Activated CD8-positive, alpha-beta T cell treated with anti-CD3 and anti-CD28 coated beads for 36 hours (primary cell): ENCODE measurements at regions of chr3 and their contacts with region 1.

Region 1: DNA sequence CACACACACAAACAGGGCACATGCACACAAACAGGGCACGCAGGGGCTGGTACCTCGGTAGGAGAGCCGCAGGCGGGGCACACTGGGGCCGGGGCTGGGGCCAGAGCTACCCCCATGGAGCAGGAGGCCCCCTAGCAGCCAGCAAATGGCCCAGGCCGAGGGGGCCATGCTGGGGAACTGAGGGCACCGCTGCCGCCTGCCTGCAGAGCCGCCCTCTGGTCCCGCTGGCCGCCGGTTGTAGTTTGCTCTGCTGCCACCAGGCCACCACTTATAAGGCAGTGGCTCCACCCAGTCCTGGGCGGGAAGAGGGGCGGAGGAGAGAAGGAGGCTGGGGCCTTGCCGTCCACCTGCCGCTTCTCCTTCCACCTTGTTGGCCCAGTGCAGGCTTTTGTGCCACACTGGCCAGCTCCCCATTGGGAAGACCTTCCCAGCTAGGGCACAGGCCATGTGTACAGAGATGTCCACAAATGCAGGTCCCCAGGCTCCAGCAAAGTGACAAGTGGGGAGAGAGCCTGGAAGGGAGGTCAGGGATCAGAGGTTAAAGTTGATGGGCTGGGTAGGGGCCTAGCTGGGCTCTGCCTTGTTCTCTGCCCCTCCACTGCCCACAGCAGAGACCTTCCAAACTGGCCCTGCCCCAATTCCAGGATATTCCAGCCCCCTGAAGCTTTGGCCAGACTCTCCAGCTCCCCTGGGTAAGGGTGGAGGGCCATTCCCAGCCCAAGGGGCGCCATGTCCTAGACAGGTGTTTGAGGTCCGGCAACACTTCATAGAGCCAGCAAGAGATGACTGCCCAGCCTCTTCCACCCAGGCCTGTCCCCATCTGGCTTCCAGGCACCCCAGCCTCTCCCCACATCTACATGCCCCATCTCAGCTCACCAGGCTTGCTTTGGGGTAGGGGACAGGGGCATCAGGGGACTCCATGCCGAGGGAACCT is at the start of gene SEMA3G:
- DNase-seq: peak; percentile 91
- ATAC-seq: peak; percentile 97
- H3K4me3 Mint-ChIP-seq: no peak within 1 kb of the TSS
- H3K27ac Mint-ChIP-seq: no peak within 1 kb of the TSS
- H3K4me1 Mint-ChIP-seq: peaks cover 4% of the 10 kb centered on the region
- H3K27me3 Mint-ChIP-seq: no peaks in the 10 kb centered on the region
- CTCF ChIP-seq: peak; percentile 64
- total RNA-seq, gene SEMA3G: not detected

Region 2: DNA sequence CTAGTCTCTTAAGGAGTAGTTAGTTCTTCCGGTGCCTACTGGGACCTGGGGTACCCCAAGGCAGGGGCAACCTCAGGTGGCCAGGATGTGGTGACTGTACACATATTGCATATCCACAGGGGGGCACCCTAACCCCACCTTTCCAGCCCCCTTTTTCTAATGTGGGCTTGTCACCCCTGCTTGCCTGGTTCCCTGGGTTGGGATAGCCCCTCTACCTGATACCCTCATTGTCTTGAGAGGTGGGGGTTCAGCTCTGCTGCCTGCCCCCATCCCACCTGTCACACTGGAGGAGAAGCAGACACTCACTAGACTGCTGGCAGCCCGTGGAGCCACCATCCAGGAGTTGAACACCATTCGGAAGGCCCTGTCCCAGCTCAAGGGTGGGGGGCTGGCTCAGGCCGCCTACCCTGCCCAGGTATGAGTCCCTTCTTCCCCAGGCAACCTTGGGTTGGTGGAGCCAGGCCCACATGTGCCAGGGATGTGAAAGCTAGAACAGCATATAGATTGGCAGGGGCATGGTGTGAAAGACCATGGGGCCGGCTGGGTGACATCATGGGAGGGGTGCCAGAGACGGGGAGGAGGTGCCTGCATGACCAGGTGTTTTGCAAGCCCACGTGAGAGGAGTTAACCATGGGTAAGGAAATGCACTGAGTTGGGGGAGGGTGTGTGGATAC is 153.5 kb before region 1 on chr3:
- CTCF ChIA-PET with region 1: interaction called, 5 read pairs
- POLR2A ChIA-PET with region 1: no interaction called
- intact Hi-C with region 1: loop called (anchors 5 kb)
- DNase-seq: peak; percentile 63
- ATAC-seq: peak; percentile 28
- H3K4me3 Mint-ChIP-seq: no peak overlapping the region
- H3K27ac Mint-ChIP-seq: no peak overlapping the region
- H3K4me1 Mint-ChIP-seq: peaks cover 22% of the 10 kb centered on the region
- H3K27me3 Mint-ChIP-seq: no peaks in the 10 kb centered on the region
- CTCF ChIP-seq: peak; percentile 78

Region 3: DNA sequence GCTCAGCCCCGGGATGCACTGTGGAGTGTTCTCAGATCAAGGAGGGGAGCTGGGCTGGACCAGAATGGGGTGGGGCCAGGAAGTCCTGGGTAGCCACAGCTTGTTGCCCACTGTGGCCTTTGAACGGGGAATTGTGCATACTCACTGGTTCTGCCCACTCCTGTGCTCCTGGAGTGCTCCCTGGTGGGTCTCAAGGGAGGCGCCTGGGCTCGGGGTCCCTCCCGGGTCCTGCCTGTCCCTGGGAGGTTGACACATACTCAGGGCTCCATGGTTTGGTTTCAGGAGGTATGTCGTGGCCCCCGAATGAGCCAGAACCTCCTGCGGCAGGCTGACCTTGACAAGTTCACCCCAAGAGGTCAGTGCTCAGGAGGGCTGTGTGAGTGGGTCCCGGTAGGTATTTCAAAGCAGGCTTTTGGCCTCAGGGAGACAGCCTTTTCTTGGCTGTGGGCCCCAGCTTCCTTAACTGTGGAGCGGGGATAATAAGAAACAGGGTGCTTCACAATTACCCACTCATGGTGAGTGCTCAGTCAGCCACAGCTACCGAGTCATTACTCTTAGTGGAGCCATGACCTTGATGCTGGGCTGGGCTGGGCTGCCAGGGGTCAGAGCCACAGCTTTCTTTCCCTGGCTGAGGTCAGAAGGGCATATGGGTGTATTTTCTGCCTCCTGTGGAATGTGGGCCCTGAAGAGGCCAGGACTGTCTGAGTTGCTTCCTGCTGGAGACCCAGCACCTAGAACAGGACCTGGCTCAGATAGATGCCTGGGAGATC is 121.4 kb before region 1 on chr3:
- CTCF ChIA-PET with region 1: no interaction called
- POLR2A ChIA-PET with region 1: no interaction called
- intact Hi-C with region 1: no loop called
- DNase-seq: no peak
- ATAC-seq: no peak
- H3K4me3 Mint-ChIP-seq: no peak overlapping the region
- H3K27ac Mint-ChIP-seq: no peak overlapping the region
- H3K4me1 Mint-ChIP-seq: no peaks in the 10 kb centered on the region
- H3K27me3 Mint-ChIP-seq: no peaks in the 10 kb centered on the region
- CTCF ChIP-seq: no peak

Region 4: GRCh38 chr3:52415800-52416199 is 29.3 kb before region 1 on chr3:
- CTCF ChIA-PET with region 1: interaction called, 104 read pairs
- POLR2A ChIA-PET with region 1: no interaction called
- intact Hi-C with region 1: no loop called
- DNase-seq: no peak
- ATAC-seq: no peak
- H3K4me3 Mint-ChIP-seq: no peak overlapping the region
- H3K27ac Mint-ChIP-seq: no peak overlapping the region
- H3K4me1 Mint-ChIP-seq: peaks cover 26% of the 10 kb centered on the region
- H3K27me3 Mint-ChIP-seq: no peaks in the 10 kb centered on the region
- CTCF ChIP-seq: no peak

Region 5: GRCh38 chr3:52423173-52423572 is 22.0 kb before region 1 on chr3:
- CTCF ChIA-PET with region 1: interaction called, 111 read pairs
- POLR2A ChIA-PET with region 1: interaction called, 6 read pairs
- intact Hi-C with region 1: loop called (anchors 2 kb)
- DNase-seq: no peak
- ATAC-seq: no peak
- H3K4me3 Mint-ChIP-seq: no peak overlapping the region
- H3K27ac Mint-ChIP-seq: no peak overlapping the region
- H3K4me1 Mint-ChIP-seq: no peaks in the 10 kb centered on the region
- H3K27me3 Mint-ChIP-seq: no peaks in the 10 kb centered on the region
- CTCF ChIP-seq: no peak

Region 6: GRCh38 chr3:52428151-52429005 is 16.7 kb before region 1 on chr3:
- CTCF ChIA-PET with region 1: interaction called, 111 read pairs
- POLR2A ChIA-PET with region 1: interaction called, 6 read pairs
- intact Hi-C with region 1: loop called (anchors 2 kb)
- DNase-seq: peak; percentile 57
- ATAC-seq: peak; percentile 87
- H3K4me3 Mint-ChIP-seq: no peak overlapping the region
- H3K27ac Mint-ChIP-seq: no peak overlapping the region
- H3K4me1 Mint-ChIP-seq: no peaks in the 10 kb centered on the region
- H3K27me3 Mint-ChIP-seq: no peaks in the 10 kb centered on the region
- CTCF ChIP-seq: peak; percentile 80

Region 7: GRCh38 chr3:52455283-52456168 is 10.4 kb after region 1 on chr3 and contains the start of gene NISCH:
- CTCF ChIA-PET with region 1: interaction called, 66 read pairs
- POLR2A ChIA-PET with region 1: interaction called, 7 read pairs
- intact Hi-C with region 1: no loop called
- DNase-seq: peak; percentile 95
- ATAC-seq: peak; percentile 91
- H3K4me3 Mint-ChIP-seq: peak within 1 kb of the TSS; percentile 83
- H3K27ac Mint-ChIP-seq: peak within 1 kb of the TSS; percentile 94
- H3K4me1 Mint-ChIP-seq: peaks cover 39% of the 10 kb centered on the region
- H3K27me3 Mint-ChIP-seq: no peaks in the 10 kb centered on the region
- CTCF ChIP-seq: no peak
- total RNA-seq, gene NISCH: 57.1 to 57.4 TPM

Region 8: GRCh38 chr3:52623234-52623792 is 178.2 kb after region 1 on chr3:
- CTCF ChIA-PET with region 1: no interaction called
- POLR2A ChIA-PET with region 1: no interaction called
- intact Hi-C with region 1: no loop called
- DNase-seq: no peak
- ATAC-seq: no peak
- H3K4me3 Mint-ChIP-seq: no peak overlapping the region
- H3K27ac Mint-ChIP-seq: peak overlapping the region; percentile 32
- H3K4me1 Mint-ChIP-seq: peaks cover 21% of the 10 kb centered on the region
- H3K27me3 Mint-ChIP-seq: no peaks in the 10 kb centered on the region
- CTCF ChIP-seq: no peak